MCF 10A (cell line): ENCODE measurements at regions of chrX and their contacts with region 1.

Region 1: DNA sequence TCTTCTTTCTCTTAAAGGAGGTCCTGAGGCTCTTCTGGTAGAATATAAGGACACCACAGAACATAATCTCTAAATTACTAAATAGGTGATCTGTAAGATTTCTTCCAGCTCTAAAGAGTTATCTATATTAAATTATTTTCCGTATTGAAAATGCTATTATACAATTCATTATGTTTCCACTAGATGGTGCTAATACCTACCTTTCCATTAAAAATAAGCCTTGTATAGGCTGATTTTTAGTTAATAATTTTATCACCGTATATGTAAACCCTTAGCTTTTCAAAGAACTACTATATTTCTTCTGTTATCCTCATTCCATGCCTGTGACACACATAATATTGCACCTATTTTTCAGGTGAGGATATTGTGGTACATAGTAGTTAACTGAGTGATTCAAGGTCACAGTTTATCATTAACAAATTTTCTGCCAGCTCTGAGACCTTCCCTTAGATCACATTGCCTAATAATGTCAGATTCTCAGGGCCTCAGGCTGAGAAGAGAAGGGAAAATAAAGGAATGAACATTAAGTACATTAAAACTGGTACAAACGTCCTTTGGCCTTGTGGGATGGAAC is 138.8 kb downstream of the TEX11 start:
- DNase-seq: peak; percentile 16
- H3K4me3 Mint-ChIP-seq: no peak overlapping the region
- H3K27ac Mint-ChIP-seq: no peak overlapping the region
- H3K4me1 Mint-ChIP-seq: no peaks in the 10 kb centered on the region
- H3K27me3 Mint-ChIP-seq: peaks cover 58% of the 10 kb centered on the region
- CTCF ChIP-seq: peak; percentile 47

Region 2: GRCh38 chrX:70960728-70961127 is 191.0 kb after region 1 on chrX:
- CTCF ChIA-PET with region 1: interaction called, 23 read pairs
- POLR2A ChIA-PET with region 1: interaction called, 3 read pairs
- intact Hi-C with region 1: loop called (anchors 1 kb)
- DNase-seq: peak; percentile 33
- H3K4me3 Mint-ChIP-seq: no peak overlapping the region
- H3K27ac Mint-ChIP-seq: no peak overlapping the region
- H3K4me1 Mint-ChIP-seq: no peaks in the 10 kb centered on the region
- H3K27me3 Mint-ChIP-seq: peaks cover 42% of the 10 kb centered on the region
- CTCF ChIP-seq: peak; percentile 24